Activated CD8-positive, alpha-beta T cell treated with anti-CD3 and anti-CD28 coated beads for 36 hours (primary cell): ENCODE measurements at regions of chr6 and their contacts with region 1.

Region 1: GRCh38 chr6:30616811-30617564 is at the start of gene PPP1R10:
- DNase-seq: peak; percentile 99
- ATAC-seq: peak; percentile 82
- H3K4me3 Mint-ChIP-seq: peak within 1 kb of the TSS; percentile 95
- H3K27ac Mint-ChIP-seq: peak within 1 kb of the TSS; percentile 98
- H3K4me1 Mint-ChIP-seq: peaks cover 39% of the 10 kb centered on the region
- H3K27me3 Mint-ChIP-seq: no peaks in the 10 kb centered on the region
- CTCF ChIP-seq: no peak
- total RNA-seq, gene PPP1R10: 59.0 to 59.8 TPM

Region 2: DNA sequence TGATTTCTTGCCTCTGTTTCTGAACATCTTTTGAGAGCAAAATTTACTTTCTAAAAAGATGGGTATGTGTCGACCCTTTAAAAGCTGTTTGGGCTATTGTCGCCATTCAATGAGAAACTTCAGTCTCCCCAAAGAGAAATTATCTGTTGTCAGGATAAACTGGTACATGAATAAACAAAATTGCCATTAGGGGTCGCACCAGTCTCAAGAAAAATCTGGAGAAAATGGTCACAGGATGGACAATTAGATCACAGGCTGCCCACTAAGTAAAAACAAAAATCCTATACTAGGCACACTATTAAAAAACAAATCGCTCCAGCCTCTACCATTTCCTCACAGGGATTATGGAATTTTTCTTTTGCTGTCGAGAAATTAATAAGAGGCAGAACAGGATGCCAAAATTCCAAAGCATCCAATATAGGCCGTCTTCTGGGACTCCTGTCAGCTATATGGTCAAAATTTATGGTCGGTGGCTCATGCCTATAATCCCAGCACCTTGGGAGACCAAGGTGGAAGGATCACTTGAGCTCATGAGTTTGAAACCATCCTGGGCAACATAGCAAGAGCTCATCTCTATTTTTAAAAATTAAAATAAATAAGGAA is 133.2 kb before region 1 on chr6:
- CTCF ChIA-PET with region 1: interaction called, 10 read pairs
- POLR2A ChIA-PET with region 1: interaction called, 4 read pairs
- intact Hi-C with region 1: loop called (anchors 5 kb)
- DNase-seq: peak; percentile 51
- ATAC-seq: no peak
- H3K4me3 Mint-ChIP-seq: no peak overlapping the region
- H3K27ac Mint-ChIP-seq: no peak overlapping the region
- H3K4me1 Mint-ChIP-seq: peaks cover 42% of the 10 kb centered on the region
- H3K27me3 Mint-ChIP-seq: peaks cover 37% of the 10 kb centered on the region
- CTCF ChIP-seq: peak; percentile 84

Region 3: DNA sequence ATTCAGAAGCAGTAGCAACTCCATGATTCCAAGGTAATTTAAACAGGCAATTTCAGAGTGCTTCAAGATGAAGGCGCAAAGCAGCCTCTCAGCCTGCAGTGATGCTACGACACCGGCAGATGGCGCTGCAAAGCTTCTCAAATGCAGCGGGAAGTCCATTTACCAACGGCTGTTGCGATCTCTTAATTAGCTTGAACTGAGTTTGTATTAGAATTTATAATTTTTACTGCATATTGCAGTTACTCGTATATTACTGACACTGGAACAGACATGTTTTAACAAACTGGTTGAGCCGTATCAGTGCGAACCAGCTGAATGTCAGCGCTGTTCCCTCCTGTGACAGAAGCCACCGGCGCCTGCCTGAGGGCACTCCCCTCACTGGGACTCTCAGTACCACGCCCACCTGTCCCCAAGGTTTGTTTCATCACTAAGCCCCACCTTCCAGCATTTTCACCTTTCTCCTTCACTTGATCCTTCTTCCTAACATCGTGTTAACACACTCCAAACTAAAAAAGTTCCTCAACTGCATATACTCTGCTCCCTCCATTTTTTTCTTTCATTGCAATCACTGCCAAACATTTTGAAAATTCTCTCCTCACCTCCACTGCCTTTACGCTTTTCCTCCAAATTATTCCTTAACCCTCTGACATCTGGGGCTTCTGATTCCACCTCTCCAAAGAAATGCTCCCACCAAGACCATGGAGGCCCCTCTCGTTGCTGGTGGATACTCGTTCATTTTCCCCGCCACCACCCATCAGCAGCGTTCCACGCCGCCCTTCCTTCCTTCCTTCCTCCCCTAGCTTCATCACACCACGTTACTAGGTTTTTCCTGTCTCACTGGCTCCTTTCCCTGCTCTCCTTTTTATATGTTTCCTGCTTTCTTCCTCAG is 75.2 kb before region 1 on chr6:
- CTCF ChIA-PET with region 1: interaction called, 50 read pairs
- POLR2A ChIA-PET with region 1: interaction called, 5 read pairs
- intact Hi-C with region 1: no loop called
- DNase-seq: peak; percentile 85
- ATAC-seq: peak; percentile 75
- H3K4me3 Mint-ChIP-seq: peak overlapping the region; percentile 71
- H3K27ac Mint-ChIP-seq: peak overlapping the region; percentile 77
- H3K4me1 Mint-ChIP-seq: peaks cover 36% of the 10 kb centered on the region
- H3K27me3 Mint-ChIP-seq: no peaks in the 10 kb centered on the region
- CTCF ChIP-seq: peak; percentile 98

Region 4: GRCh38 chr6:30571075-30571768 is 45.8 kb before region 1 on chr6 and contains the start of gene ABCF1:
- CTCF ChIA-PET with region 1: interaction called, 3 read pairs
- POLR2A ChIA-PET with region 1: interaction called, 27 read pairs
- intact Hi-C with region 1: no loop called
- DNase-seq: peak; percentile 99
- ATAC-seq: peak; percentile 92
- H3K4me3 Mint-ChIP-seq: peak within 1 kb of the TSS; percentile 86
- H3K27ac Mint-ChIP-seq: peak within 1 kb of the TSS; percentile 96
- H3K4me1 Mint-ChIP-seq: peaks cover 63% of the 10 kb centered on the region
- H3K27me3 Mint-ChIP-seq: no peaks in the 10 kb centered on the region
- CTCF ChIP-seq: no peak
- total RNA-seq, gene ABCF1: 86.9 to 88.0 TPM

Region 5: DNA sequence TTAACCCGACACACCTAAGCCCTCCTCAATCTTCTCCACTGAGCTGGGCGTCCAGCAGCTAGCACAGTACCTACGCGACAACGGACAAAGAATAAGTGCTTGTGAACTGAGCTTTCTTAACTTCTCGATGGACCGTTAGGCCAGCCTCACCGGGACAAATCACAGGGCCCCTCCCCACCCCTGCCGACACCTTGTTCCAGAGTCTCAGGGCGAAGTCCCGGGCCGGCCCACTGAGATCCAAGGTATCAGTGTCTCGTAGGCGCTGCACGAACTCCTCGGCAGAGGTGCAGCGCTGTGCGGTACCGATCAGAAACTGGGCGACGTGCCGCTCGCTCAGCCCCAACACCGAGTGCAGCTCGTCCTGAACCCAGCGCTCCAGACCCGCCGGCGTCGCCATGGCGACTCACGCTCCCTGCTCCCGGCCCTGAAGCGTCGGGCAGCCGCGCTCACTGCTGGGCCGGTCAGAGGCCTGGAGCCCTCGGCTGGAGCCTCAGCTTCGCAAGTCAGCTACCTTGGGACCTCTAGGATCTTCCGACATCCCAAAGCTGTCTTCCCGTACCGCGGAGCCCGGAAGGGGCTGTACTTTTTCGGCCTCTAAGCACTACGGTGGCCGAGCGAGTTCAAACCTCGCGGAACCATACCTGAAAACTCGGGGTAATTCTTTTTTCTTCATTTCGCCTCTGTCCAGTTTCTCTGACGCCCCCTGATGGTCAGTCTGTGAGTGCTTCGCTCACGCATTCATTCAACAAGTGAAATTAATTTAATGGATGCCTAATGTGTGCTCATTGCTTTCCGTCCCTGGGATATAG is 55.7 kb after region 1 on chr6 and contains the start of gene DHX16:
- CTCF ChIA-PET with region 1: interaction called, 4 read pairs
- POLR2A ChIA-PET with region 1: interaction called, 13 read pairs
- intact Hi-C with region 1: no loop called
- DNase-seq: peak; percentile 95
- ATAC-seq: peak; percentile 83
- H3K4me3 Mint-ChIP-seq: peak within 1 kb of the TSS; percentile 74
- H3K27ac Mint-ChIP-seq: peak within 1 kb of the TSS; percentile 85
- H3K4me1 Mint-ChIP-seq: peaks cover 26% of the 10 kb centered on the region
- H3K27me3 Mint-ChIP-seq: no peaks in the 10 kb centered on the region
- CTCF ChIP-seq: peak; percentile 70
- total RNA-seq, gene DHX16: 31.1 to 31.3 TPM

Region 6: DNA sequence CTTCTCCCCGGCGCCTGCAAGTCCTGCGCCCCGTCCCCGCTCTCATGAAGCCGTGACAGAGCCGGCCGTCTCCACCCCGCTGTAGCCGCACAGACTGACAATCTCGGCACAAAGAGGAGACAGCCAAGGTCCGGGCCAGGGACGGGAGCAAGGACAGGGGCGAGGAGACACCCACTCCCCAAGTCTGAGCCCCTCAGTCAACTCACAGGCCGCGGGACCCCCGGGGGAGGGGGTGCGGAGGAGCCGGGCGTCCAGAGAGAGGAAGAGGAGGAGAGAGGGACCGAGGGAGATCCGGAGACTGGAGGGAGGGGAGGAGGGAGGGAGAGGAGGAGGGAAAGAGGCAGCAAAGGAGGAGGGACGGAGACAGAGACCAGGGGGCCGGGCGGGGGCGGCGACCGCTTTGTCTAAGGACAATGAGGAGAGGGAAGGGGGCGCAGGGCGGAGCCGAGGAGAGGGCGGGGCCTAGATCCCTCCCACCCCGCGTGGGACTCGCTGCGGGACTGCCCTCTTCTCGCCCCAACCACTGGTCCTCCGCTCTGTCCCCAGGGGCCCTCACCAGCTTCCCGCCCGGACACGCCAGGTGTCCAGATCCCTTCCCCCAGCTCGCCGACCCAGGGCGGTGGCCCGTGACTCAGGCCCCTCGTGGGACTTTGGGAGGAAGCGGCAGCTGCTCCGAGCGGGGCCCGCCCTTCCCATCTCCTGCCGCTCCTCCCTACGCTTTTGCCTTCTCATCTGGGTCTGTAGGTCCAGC is 70.1 kb after region 1 on chr6:
- CTCF ChIA-PET with region 1: interaction called, 3 read pairs
- POLR2A ChIA-PET with region 1: interaction called, 39 read pairs
- intact Hi-C with region 1: loop called (anchors 5 kb)
- DNase-seq: peak; percentile 88
- ATAC-seq: peak; percentile 21
- H3K4me3 Mint-ChIP-seq: peak overlapping the region; percentile 88
- H3K27ac Mint-ChIP-seq: peak overlapping the region; percentile 88
- H3K4me1 Mint-ChIP-seq: peaks cover 36% of the 10 kb centered on the region
- H3K27me3 Mint-ChIP-seq: no peaks in the 10 kb centered on the region
- CTCF ChIP-seq: no peak

Region 7: DNA sequence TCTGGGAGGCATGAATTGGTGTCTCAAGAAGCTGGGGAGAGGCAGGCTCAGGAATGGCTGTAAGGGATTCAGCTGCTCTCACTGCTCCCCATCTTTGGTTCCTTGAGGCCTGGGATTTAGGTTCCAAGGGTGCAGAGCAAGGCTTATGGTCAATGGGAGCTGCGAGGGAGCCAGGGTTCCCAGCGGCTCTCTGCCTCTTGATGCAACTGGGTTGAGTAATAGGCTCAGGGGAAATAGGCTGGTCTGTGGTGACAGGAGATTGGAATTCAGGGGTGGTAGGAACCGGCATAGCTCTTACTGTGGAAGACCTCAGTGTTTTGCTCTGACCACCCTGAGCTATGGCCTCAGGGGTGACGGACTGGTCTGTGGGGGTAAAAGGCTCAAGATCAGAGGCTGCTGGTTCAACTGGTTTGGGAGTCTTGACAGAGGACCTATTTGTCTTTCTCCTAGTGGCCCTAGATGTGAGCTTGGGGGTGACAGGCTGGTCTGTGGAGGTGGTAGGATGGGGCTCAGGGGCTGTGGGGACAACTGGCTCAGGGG is 86.9 kb after region 1 on chr6:
- CTCF ChIA-PET with region 1: no interaction called
- POLR2A ChIA-PET with region 1: no interaction called
- intact Hi-C with region 1: no loop called
- DNase-seq: no peak
- ATAC-seq: no peak
- H3K4me3 Mint-ChIP-seq: no peak overlapping the region
- H3K27ac Mint-ChIP-seq: no peak overlapping the region
- H3K4me1 Mint-ChIP-seq: no peaks in the 10 kb centered on the region
- H3K27me3 Mint-ChIP-seq: no peaks in the 10 kb centered on the region
- CTCF ChIP-seq: no peak

Region 8: DNA sequence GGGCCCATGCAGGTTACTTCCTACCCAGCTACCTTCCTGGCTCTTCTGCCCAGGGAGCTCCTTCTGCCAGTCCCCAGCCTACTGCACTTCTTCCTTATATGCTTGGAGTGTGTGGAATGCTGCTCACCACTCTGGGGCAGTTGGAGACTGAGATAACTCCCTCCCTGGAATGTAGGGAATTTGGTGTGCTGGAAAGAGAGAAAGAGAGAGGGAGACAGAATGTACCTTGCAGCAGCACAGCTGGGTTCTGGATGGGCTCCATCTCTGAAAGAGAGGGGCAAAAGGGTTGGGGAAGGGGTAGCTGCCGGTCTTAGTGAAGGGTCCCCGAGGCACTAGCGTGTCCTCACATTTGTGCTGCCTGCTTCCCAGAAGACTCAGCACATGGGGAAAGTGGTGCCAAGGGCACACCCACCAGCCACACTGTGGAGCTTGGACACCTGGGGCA is 227.1 kb after region 1 on chr6:
- CTCF ChIA-PET with region 1: no interaction called
- POLR2A ChIA-PET with region 1: no interaction called
- intact Hi-C with region 1: no loop called
- DNase-seq: no peak
- ATAC-seq: no peak
- H3K4me3 Mint-ChIP-seq: peak overlapping the region; percentile 69
- H3K27ac Mint-ChIP-seq: peak overlapping the region; percentile 80
- H3K4me1 Mint-ChIP-seq: peaks cover 40% of the 10 kb centered on the region
- H3K27me3 Mint-ChIP-seq: no peaks in the 10 kb centered on the region
- CTCF ChIP-seq: no peak

Region 9: DNA sequence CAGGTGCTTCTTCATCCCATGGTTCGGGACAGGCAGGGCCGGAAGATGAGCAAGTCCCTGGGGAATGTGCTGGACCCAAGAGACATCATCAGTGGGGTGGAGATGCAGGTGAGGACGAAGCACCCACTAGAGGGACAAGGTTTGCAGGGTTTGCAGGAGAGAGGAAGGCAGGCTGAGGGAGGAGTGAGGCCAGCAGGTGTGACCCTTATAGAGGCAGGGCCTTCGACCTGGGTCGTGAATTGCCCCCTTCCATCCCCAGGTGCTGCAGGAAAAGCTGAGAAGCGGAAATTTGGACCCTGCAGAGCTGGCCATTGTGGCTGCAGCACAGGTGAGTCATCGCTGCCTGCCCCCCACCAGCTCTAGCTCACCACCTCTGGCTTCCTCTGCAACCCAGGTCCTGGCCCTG is 305.5 kb after region 1 on chr6:
- CTCF ChIA-PET with region 1: no interaction called
- POLR2A ChIA-PET with region 1: no interaction called
- intact Hi-C with region 1: no loop called
- DNase-seq: no peak
- ATAC-seq: no peak
- H3K4me3 Mint-ChIP-seq: no peak overlapping the region
- H3K27ac Mint-ChIP-seq: no peak overlapping the region
- H3K4me1 Mint-ChIP-seq: no peaks in the 10 kb centered on the region
- H3K27me3 Mint-ChIP-seq: no peaks in the 10 kb centered on the region
- CTCF ChIP-seq: no peak